MCF 10A (cell line): ENCODE measurements at regions of chr9 and their contacts with region 1.

Region 1: GRCh38 chr9:5832543-5833529 is at the start of gene ERMP1:
- DNase-seq: peak; percentile 84
- H3K4me3 Mint-ChIP-seq: peak within 1 kb of the TSS; percentile 76
- H3K27ac Mint-ChIP-seq: no peak within 1 kb of the TSS
- H3K4me1 Mint-ChIP-seq: peaks cover 10% of the 10 kb centered on the region
- H3K27me3 Mint-ChIP-seq: no peaks in the 10 kb centered on the region
- CTCF ChIP-seq: peak; percentile 89
- total RNA-seq, gene ERMP1: 13.6 and 17.2 TPM in 2 replicates

Region 2: DNA sequence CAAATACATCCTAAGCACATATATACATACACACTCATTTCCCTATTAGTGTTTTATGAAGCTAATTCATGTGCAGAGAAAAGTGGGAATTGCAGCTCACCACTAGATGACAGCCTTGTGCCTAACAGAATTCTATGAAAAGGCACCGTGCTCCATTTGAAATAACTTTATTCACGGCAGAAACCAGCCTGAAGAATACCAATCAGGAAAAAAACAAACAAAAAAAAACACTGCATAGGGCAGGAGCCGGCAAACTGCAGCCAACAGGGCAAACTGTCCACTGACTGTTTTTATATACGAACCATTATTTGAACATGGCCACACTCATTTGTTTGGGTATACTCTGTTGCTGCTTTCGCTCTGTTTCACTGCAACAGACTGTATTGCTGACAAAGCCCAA is 33.5 kb before region 1 on chr9:
- CTCF ChIA-PET with region 1: interaction called, 27 read pairs
- POLR2A ChIA-PET with region 1: interaction called, 12 read pairs
- intact Hi-C with region 1: loop called (anchors 1 kb)
- DNase-seq: peak; percentile 55
- H3K4me3 Mint-ChIP-seq: no peak overlapping the region
- H3K27ac Mint-ChIP-seq: no peak overlapping the region
- H3K4me1 Mint-ChIP-seq: peaks cover 6% of the 10 kb centered on the region
- H3K27me3 Mint-ChIP-seq: no peaks in the 10 kb centered on the region
- CTCF ChIP-seq: peak; percentile 70

Region 3: DNA sequence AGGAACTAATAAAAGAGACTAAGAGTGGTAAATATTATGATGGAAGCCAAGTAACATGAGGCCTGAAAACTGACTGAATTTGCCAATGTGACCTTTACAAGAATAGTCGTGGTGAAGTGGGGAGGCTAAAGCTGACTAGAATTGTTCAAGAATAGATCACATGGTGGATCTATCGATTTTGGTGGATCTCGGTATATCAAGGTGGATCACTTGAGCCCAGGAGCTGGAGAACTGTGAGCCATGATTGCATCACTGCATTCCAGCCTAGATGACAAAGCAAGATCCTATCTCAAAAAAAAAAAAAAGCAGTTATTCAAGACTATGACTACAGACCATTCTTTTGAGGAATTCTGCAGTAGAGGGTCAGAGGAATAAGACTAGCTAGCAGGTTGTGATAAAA is 15.0 kb before region 1 on chr9:
- CTCF ChIA-PET with region 1: interaction called, 45 read pairs
- POLR2A ChIA-PET with region 1: interaction called, 12 read pairs
- intact Hi-C with region 1: no loop called
- DNase-seq: peak; percentile 67
- H3K4me3 Mint-ChIP-seq: no peak overlapping the region
- H3K27ac Mint-ChIP-seq: peak overlapping the region; percentile 7
- H3K4me1 Mint-ChIP-seq: peaks cover 16% of the 10 kb centered on the region
- H3K27me3 Mint-ChIP-seq: no peaks in the 10 kb centered on the region
- CTCF ChIP-seq: no peak

Region 4: DNA sequence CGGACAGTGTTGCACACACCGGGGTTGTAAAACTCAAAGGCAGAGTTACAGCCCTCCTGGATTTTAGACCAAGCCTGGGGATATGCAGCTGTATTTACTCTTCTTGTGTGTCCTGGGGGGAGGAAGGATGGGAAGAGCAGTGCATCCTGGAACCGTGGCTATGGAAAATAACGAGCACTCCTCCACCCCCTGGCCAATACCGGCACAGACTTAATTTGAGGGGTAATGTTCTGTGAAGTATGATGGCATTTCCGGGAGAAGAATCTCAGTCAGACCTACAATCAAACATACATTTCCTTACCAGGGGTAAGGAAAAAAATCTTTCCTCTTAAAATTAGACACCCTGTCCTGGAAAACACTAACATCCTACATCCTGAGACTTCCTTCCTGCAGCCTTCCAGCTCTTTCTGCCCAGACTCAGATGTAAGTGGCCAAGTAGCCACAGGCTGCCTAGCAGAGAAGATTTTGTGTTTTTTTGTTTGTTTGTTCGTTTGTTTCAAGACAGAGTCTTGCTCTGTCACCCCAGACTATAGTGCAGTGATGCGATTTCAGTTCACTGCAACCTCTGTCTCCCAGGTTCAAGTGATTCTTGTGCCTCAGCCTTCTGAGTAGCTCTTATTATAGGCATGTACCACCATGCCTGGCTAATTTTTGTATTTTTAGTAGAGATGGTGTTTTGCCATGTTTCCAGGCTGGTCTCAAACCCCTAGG is 11.1 kb after region 1 on chr9:
- CTCF ChIA-PET with region 1: interaction called, 34 read pairs
- POLR2A ChIA-PET with region 1: interaction called, 8 read pairs
- intact Hi-C with region 1: no loop called
- DNase-seq: peak; percentile 36
- H3K4me3 Mint-ChIP-seq: no peak overlapping the region
- H3K27ac Mint-ChIP-seq: peak overlapping the region; percentile 82
- H3K4me1 Mint-ChIP-seq: peaks cover 44% of the 10 kb centered on the region
- H3K27me3 Mint-ChIP-seq: no peaks in the 10 kb centered on the region
- CTCF ChIP-seq: no peak

Region 5: GRCh38 chr9:5851445-5851844 is 18.6 kb after region 1 on chr9:
- CTCF ChIA-PET with region 1: interaction called, 15 read pairs
- POLR2A ChIA-PET with region 1: interaction called, 22 read pairs
- intact Hi-C with region 1: no loop called
- DNase-seq: peak; percentile 93
- H3K4me3 Mint-ChIP-seq: no peak overlapping the region
- H3K27ac Mint-ChIP-seq: peak overlapping the region; percentile 88
- H3K4me1 Mint-ChIP-seq: peaks cover 15% of the 10 kb centered on the region
- H3K27me3 Mint-ChIP-seq: no peaks in the 10 kb centered on the region
- CTCF ChIP-seq: no peak

Region 6: DNA sequence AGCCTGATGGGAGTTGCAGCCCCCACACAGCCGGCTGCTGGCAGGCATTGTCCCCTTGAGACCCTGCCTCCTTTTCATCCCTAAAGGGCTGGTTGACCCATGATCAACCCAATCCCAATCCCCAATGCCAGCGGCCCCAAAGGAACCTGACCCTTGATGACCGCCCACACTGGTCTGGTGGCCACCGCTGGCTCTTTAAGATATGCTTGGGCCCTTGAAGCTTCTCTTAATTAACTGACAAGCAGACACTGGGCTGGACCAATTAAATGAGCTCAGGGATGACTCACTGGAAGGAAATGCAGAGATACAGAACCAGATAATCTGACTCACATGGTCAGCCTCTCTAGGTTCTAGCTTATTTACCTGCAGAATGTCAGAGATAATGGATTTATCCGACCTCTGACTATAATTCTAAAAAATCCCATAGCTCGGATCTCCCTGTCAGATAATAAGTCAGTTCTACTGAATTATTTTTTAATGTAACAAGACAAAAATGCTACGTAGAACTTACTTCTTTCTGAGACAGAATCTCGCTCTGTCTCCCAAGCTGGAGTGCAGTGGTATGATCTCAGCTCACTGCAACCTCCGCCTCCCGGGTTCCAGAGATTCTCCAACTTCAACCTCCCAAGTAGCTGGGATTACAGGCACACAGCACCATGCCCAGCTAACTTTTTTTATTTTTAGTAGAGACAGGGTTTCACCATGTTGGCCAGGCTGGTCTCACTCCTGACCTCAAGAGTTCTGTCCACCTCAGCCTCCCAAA is 46.8 kb after region 1 on chr9:
- CTCF ChIA-PET with region 1: interaction called, 36 read pairs
- POLR2A ChIA-PET with region 1: interaction called, 37 read pairs
- intact Hi-C with region 1: loop called (anchors 5 kb)
- DNase-seq: peak; percentile 85
- H3K4me3 Mint-ChIP-seq: peak overlapping the region; percentile 58
- H3K27ac Mint-ChIP-seq: peak overlapping the region; percentile 80
- H3K4me1 Mint-ChIP-seq: peaks cover 9% of the 10 kb centered on the region
- H3K27me3 Mint-ChIP-seq: no peaks in the 10 kb centered on the region
- CTCF ChIP-seq: no peak

Region 7: GRCh38 chr9:6902423-6902822 is 1069.6 kb after region 1 on chr9:
- CTCF ChIA-PET with region 1: no interaction called
- POLR2A ChIA-PET with region 1: no interaction called
- intact Hi-C with region 1: no loop called
- DNase-seq: peak; percentile 51
- H3K4me3 Mint-ChIP-seq: no peak overlapping the region
- H3K27ac Mint-ChIP-seq: no peak overlapping the region
- H3K4me1 Mint-ChIP-seq: peaks cover 11% of the 10 kb centered on the region
- H3K27me3 Mint-ChIP-seq: no peaks in the 10 kb centered on the region
- CTCF ChIP-seq: no peak